Ovary (tissue), 10 donors: ENCODE measurements at regions of chr17 and their contacts with region 1.

Region 1: GRCh38 chr17:52306314-52306713 is 147.8 kb upstream of the CA10 start:
- DNase-seq: no peak
- H3K4me3 ChIP-seq: no peak overlapping the region
- H3K27ac ChIP-seq: no peak overlapping the region
- H3K4me1 ChIP-seq: no peaks in the 10 kb centered on the region
- H3K27me3 ChIP-seq: no peaks in the 10 kb centered on the region
- CTCF ChIP-seq: no peak
- EP300 ChIP-seq: no peak
- POLR2A ChIP-seq: no peak

Region 2: DNA sequence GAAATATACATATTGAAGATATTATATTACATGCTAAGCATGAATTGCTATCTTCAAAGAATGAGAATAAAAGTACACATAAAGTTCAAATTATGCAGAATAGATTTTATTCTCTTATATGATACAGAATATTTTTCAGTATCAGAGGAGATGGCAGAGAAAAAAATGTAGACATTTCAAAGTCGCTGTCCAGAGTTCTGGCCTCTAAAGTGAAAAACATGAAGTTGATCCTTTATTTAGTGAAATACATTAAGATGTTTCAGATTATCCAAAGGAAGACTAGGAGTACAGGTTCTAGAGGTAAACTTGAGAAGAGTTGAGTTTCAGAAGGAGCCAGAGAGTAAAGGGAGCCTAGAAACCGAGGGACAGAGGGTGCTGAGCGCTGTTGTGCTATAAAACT is 742.4 kb before region 1 on chr17:
- intact Hi-C with region 1: loop called in 1 of 4 experiments (anchors 10 kb)
- DNase-seq: no peak
- H3K4me3 ChIP-seq: no peak overlapping the region
- H3K27ac ChIP-seq: no peak overlapping the region
- H3K4me1 ChIP-seq: no peaks in the 10 kb centered on the region
- H3K27me3 ChIP-seq: no peaks in the 10 kb centered on the region
- CTCF ChIP-seq: no peak
- EP300 ChIP-seq: no peak
- POLR2A ChIP-seq: no peak

Region 3: DNA sequence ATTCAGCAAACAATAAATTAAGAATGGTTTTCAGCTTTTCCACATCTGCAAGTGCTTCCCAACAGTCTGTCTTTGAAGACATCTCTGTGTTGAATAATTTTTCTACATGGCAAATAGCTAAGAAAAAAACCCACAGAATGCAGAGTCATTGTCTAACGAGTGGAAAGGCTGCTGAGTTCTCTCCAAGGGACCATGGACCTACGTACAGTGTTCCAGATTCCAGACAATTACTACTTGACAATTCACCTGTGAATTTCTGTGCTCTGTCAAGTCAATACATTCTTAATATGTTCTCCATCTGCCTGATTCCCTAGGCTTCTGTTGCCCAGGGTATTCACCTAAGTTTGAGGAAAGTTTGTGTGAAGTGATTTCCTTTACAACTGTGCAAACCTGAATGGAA is 64.0 kb before region 1 on chr17:
- intact Hi-C with region 1: no loop called
- DNase-seq: no peak
- H3K4me3 ChIP-seq: no peak overlapping the region
- H3K27ac ChIP-seq: no peak overlapping the region
- H3K4me1 ChIP-seq: no peaks in the 10 kb centered on the region
- H3K27me3 ChIP-seq: no peaks in the 10 kb centered on the region
- CTCF ChIP-seq: no peak
- EP300 ChIP-seq: no peak
- POLR2A ChIP-seq: no peak

Region 4: DNA sequence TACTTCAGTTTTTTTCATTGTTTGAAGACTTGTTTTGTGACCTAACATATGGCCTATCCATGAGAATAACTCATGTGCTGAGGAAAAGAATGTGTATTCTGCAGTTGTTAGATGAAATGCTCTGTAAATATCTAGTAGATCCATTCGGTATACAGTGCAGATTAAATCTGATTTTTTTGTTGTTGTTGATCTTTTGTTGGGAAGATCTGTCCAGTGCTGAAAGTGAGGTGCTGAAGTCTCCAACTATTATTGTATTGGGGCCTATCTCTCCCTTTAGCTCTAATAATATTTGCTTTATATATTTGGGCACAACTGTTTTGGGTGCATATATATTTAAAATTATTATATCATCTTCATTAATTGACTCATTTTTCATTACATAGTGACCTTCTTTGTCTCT is 38.6 kb after region 1 on chr17:
- intact Hi-C with region 1: no loop called
- DNase-seq: no peak
- H3K4me3 ChIP-seq: no peak overlapping the region
- H3K27ac ChIP-seq: no peak overlapping the region
- H3K4me1 ChIP-seq: no peaks in the 10 kb centered on the region
- H3K27me3 ChIP-seq: no peaks in the 10 kb centered on the region
- CTCF ChIP-seq: no peak
- EP300 ChIP-seq: no peak
- POLR2A ChIP-seq: no peak